Calu3 (cell line): ENCODE measurements at regions of chr2 and their contacts with region 1.

Region 1: DNA sequence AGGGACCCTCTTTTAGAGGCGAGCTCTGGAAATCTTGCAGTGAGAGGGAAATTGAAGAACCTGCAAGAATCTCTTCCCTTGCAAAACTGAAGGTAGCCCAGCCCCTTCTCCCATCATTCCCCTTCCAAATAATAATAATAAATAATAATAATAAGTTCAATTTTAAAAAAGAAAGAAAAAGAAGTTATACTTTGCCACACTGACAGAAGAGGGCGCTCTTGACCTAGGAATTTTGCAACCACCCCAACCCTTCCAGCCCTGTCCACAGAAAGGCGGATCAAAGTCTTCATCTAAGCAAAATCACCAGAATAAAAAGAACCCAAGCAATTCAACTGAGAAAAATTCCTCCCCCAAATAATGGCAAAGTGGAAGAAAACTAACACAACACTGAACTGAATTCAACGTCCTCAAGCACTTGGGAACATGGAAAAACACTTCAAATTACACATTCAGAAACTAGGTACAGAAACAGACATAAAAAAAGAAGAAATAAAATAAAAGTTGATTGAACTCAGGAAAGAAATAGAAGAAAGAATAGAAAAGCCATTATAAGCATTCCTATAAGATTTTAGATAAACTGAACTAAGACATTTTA is 98.9 kb upstream of the GLS start:
- DNase-seq: peak; percentile 69
- H3K4me3 Mint-ChIP-seq: no peak overlapping the region
- H3K27ac Mint-ChIP-seq: no peak overlapping the region
- H3K4me1 Mint-ChIP-seq: peaks cover 13% of the 10 kb centered on the region
- H3K27me3 Mint-ChIP-seq: peaks cover 8% of the 10 kb centered on the region
- CTCF ChIP-seq: peak; percentile 77

Region 2: GRCh38 chr2:190235101-190235500 is 546.6 kb before region 1 on chr2:
- CTCF ChIA-PET with region 1: no interaction called
- intact Hi-C with region 1: no loop called
- DNase-seq: no peak
- H3K4me3 Mint-ChIP-seq: no peak overlapping the region
- H3K27ac Mint-ChIP-seq: no peak overlapping the region
- H3K4me1 Mint-ChIP-seq: peaks cover 7% of the 10 kb centered on the region
- H3K27me3 Mint-ChIP-seq: no peaks in the 10 kb centered on the region
- CTCF ChIP-seq: no peak

Region 3: GRCh38 chr2:190880378-190881073 is 98.8 kb after region 1 on chr2 and contains the start of gene GLS:
- CTCF ChIA-PET with region 1: no interaction called
- intact Hi-C with region 1: no loop called
- DNase-seq: peak; percentile 96
- H3K4me3 Mint-ChIP-seq: peak within 1 kb of the TSS; percentile 97
- H3K27ac Mint-ChIP-seq: peak within 1 kb of the TSS; percentile 100
- H3K4me1 Mint-ChIP-seq: peaks cover 19% of the 10 kb centered on the region
- H3K27me3 Mint-ChIP-seq: no peaks in the 10 kb centered on the region
- CTCF ChIP-seq: no peak
- total RNA-seq, gene GLS: 110 and 115 TPM in 2 replicates

Region 4: GRCh38 chr2:191030521-191031154 is 248.9 kb after region 1 on chr2:
- CTCF ChIA-PET with region 1: no interaction called
- intact Hi-C with region 1: loop called (anchors 2 kb)
- DNase-seq: peak; percentile 43
- H3K4me3 Mint-ChIP-seq: no peak overlapping the region
- H3K27ac Mint-ChIP-seq: no peak overlapping the region
- H3K4me1 Mint-ChIP-seq: peaks cover 13% of the 10 kb centered on the region
- H3K27me3 Mint-ChIP-seq: no peaks in the 10 kb centered on the region
- CTCF ChIP-seq: peak; percentile 75